ENCODE measurements at regions of chr2 and their contacts with region 1.

Region 1: DNA sequence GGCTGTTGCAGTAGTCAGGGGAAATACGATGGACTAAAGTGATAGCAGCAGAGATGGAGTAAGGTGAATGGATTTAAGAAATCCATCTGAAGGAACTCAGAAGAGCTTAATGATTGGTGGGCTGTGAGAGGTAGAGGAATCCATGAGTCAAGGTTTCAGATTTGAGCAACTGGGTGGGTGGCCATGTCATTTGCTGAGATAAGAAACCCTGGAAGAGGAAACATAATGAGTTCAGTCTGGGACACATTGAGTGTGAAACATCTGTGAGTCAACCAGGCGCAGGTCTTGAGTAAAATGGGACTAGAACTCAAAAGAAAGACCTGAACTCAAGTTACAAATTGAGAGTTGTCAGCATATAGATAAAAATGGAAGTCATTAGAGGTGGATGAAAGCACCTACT is 19.7 kb upstream of the ASNSD1 start:
- DNase-seq: peak; percentile 71
- H3K4me3 Mint-ChIP-seq: no peak overlapping the region
- H3K27ac Mint-ChIP-seq: peak overlapping the region; percentile 10
- H3K4me1 Mint-ChIP-seq: peaks cover 25% of the 10 kb centered on the region
- H3K27me3 Mint-ChIP-seq: no peaks in the 10 kb centered on the region

Region 2: DNA sequence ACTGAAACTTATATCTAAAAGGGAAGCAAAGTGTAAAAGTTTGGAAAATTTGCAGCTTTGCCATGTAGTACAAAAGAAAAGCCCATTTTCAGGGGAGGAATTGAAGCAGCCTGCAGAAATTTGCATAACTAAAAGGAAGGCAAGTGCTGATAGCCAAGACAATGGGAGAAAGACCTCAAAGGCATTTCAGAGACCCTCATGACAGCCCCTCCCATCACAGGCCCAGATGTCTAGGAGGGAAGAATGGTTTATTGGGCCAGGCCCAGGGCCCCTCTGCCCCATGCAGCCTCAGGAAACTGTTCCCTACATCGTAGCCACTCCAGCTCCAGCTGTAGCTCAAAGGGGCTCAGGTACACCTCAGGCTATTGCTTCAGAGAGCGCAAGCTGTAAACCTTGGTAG is 214.7 kb before region 1 on chr2:
- CTCF ChIA-PET with region 1: no interaction called
- intact Hi-C with region 1: no loop called
- DNase-seq: no peak
- H3K4me3 Mint-ChIP-seq: no peak overlapping the region
- H3K27ac Mint-ChIP-seq: no peak overlapping the region
- H3K4me1 Mint-ChIP-seq: no peaks in the 10 kb centered on the region
- H3K27me3 Mint-ChIP-seq: no peaks in the 10 kb centered on the region

Region 3: DNA sequence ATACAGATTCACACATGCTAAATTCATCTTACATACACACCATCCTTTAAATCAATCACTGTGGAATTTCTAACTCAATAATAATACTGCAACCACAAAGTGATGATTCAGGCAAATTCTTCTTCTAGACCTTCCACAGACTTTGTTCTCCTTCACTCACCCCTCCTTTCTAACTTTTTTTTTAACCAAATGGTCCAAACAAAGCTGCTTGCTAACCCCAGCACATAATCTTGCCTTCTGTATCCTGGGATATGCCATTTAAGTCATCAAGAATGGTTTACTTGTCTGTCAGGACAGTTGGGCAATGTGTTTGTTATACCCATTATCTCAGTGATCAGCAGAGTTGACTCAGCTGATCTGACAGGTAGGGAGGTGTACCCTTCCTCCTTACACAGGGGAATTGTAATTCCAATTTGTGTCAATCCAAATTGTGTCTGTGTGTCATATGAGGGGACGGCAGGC is 71.0 kb before region 1 on chr2:
- CTCF ChIA-PET with region 1: no interaction called
- intact Hi-C with region 1: loop called (anchors 2 kb)
- DNase-seq: no peak
- H3K4me3 Mint-ChIP-seq: no peak overlapping the region
- H3K27ac Mint-ChIP-seq: no peak overlapping the region
- H3K4me1 Mint-ChIP-seq: peaks cover 45% of the 10 kb centered on the region
- H3K27me3 Mint-ChIP-seq: no peaks in the 10 kb centered on the region

Region 4: DNA sequence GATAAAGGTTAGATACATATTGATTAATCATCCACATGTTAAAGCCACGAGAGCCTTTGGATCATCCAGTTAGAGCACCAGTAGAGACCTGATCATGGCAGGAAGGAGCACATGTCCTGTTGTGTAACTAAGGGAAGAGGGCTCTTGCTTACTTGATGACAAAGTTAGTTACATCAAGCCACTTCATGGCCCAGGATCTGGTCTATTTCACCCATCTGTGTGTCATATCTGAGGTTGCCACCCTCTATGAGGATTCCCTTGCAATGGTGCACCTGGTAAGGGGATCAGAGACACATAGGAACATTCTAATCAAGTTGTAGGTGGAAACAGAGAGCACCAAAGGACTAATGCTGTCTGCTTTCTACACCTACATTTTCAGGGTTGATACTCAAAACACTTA is 39.6 kb after region 1 on chr2:
- CTCF ChIA-PET with region 1: no interaction called
- intact Hi-C with region 1: no loop called
- DNase-seq: no peak
- H3K4me3 Mint-ChIP-seq: no peak overlapping the region
- H3K27ac Mint-ChIP-seq: no peak overlapping the region
- H3K4me1 Mint-ChIP-seq: peaks cover 47% of the 10 kb centered on the region
- H3K27me3 Mint-ChIP-seq: no peaks in the 10 kb centered on the region

Measured in activated naive CD4-positive, alpha-beta T cell treated with anti-CD3 and anti-CD28 coated beads for 36 hours (primary cell).